Activated T-helper 1 cell treated with anti-CD3 and anti-CD28 coated beads, Interleukin-12 subunit alpha, Interleukin-12 subunit beta, Interleukin-2, Interleukin-4 antibody, amounts not matched to agents 30 ng/mL and 10 ng/mL and 1 ng/mL, durations not matched to agents 14 hours and 24 hours and 36 hours (primary cell): ENCODE measurements at regions of chr9 and their contacts with region 1.

Region 1: DNA sequence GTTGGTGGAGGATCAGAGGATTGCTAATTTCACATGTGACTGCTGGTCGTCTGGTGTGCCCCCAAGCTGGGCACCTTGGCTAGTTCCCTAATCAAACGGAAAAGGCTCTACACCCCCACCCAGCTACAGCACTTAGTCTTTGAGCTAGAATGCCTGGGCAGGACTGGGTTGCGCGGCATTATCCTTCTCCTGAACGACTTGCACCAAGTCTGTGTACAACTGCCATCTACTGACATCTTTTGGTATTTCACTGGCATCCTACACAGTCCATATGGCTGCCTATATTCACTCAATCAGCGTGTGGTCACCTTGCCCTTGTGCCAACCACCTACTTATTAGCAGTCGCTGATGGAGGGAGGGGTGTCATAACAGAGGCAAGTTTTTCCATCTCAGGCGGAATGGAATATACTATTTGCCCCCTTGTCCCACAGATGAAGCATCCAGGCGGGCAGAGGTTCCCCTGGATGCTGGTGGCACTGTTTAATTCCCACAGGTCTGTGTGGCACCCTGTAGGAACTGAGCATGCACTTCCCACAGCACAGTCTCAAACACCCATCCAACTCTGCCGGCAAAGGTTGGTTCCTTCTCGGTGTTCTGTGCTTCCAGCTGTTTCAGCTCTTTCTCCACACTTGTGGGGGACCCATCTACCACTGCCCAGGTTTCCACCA is 150.1 kb downstream of the OSTF1 start:
- DNase-seq: peak; percentile 10
- H3K4me3 Mint-ChIP-seq: no peak overlapping the region
- H3K27ac Mint-ChIP-seq: no peak overlapping the region
- H3K4me1 Mint-ChIP-seq: no peaks in the 10 kb centered on the region
- H3K27me3 Mint-ChIP-seq: peaks cover 4% of the 10 kb centered on the region

Region 2: GRCh38 chr9:75185585-75186170 is 52.8 kb before region 1 on chr9:
- intact Hi-C with region 1: loop called (anchors 5 kb)
- DNase-seq: peak; percentile 11
- H3K4me3 Mint-ChIP-seq: no peak overlapping the region
- H3K27ac Mint-ChIP-seq: no peak overlapping the region
- H3K4me1 Mint-ChIP-seq: peaks cover 27% of the 10 kb centered on the region
- H3K27me3 Mint-ChIP-seq: no peaks in the 10 kb centered on the region

Region 3: DNA sequence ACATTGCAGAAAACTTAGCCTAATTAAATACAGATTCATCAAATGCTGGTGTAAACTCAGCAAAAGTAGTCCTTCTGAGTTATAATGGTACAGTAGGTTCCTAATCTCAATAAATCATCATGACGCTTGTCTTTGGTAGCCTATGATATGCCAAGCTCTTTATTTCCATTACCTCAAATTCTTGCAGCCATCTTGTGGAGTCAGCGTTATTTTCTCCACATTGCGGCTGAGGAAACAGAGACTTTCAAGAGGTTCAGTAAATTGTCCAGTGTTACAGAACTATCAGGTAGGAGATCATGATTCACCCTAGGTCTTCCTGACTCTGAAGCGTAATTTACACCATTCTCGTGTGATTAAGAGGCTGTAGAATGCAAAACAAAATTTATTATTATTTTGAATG is 889.2 kb after region 1 on chr9:
- intact Hi-C with region 1: no loop called
- DNase-seq: no peak
- H3K4me3 Mint-ChIP-seq: no peak overlapping the region
- H3K27ac Mint-ChIP-seq: no peak overlapping the region
- H3K4me1 Mint-ChIP-seq: no peaks in the 10 kb centered on the region
- H3K27me3 Mint-ChIP-seq: no peaks in the 10 kb centered on the region